ENCODE measurements at regions of chr16 and their contacts with region 1.

Region 1: DNA sequence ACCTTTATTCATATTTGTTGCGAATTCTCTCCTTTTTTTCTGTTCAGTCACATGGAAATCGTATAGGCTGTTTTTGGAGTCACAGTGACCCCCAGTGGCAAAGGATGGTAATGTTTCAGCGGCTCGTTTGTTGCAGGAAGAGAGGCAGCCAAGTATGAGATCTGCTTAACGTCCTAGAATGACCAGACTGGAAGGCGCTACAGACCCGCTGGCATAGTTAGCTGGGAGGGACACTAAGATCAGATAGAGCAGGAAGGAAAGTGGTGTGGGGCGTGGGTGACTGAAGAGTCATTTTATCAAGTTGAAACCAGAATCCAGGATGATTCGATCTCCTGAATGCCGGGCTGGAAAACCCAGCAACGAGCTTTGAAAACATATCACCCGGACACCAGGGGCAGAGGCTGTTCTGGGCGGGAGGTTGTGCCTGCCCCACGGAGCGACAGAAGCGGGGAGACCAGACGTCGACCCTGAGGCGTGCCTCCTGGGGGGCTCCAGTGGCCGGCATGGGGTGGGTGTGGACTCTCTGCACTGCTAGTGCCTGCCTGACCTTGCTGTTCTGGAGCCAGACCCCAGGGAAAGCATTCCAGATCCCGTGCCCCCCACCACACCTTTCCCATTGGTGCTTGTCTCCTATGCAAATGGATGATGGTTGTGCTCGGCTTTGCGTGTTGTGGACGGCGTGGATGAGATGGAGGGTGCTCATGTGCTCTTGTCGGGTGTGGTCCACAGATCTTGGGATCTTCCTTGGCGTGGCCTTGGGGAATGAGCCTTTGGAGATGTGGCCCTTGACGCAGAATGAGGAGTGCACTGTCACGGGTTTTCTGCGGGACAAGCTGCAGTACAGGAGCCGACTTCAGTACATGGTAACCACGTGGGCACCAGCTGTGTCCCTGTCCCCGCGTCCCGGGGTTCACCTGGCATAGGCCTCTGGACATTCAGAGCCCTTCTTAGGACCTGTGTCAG is 7.7 kb downstream of the IL34 start:
- DNase-seq: peak in 8 of 10 donors; percentile 56 to 87 (median 80)
- H3K4me3 ChIP-seq: peak overlapping the region in 46 of 59 donors; percentile 2 to 50 (median 28)
- H3K27ac ChIP-seq: peak overlapping the region in 2 of 59 donors; percentile 46 to 66
- H3K27me3 ChIP-seq: no peaks in the 10 kb centered on the region
- CTCF ChIP-seq: peak; percentile 85 to 99 (median 94)

Region 2: DNA sequence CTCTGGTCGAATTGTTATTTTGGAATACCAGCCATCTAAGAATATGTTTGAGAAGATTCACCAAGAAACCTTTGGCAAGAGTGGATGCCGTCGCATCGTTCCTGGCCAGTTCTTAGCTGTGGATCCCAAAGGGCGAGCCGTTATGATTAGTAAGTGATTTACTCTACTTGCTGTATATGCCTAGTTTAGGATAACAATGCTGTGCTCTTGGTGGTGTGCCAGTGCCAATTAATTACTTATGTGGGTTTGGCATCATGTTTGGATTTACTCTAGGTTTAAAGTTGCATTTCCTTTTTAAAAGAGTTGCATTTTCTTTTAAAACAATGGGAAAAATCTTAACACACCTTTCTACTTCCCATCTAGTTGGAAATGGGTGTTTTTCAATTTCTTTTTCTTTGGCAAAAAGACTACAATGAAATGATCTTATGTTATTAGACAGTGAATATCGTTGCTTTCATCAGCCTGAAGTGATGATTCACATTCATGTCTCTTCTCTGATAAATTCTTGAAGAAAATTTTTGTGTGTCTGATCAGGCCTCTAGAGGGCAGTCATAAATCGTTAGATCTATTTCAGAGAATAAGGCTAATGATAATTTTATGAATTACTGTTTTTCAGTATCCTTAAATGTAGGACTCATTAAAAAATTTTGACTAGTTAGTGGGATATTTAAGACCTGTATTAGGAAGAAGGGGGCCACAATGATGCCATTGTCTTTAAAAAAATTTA is 124.9 kb before region 1 on chr16:
- intact Hi-C with region 1: loop called (anchors 2 to 5 kb)
- DNase-seq: no peak
- H3K4me3 ChIP-seq: peak overlapping the region in 32 of 59 donors; percentile 1 to 37 (median 18)
- H3K27ac ChIP-seq: no peak overlapping the region
- H3K27me3 ChIP-seq: no peaks in the 10 kb centered on the region
- CTCF ChIP-seq: peak; percentile 38 to 74 (median 60)